ENCODE measurements at regions of chr12 and their contacts with region 1.

Region 1: DNA sequence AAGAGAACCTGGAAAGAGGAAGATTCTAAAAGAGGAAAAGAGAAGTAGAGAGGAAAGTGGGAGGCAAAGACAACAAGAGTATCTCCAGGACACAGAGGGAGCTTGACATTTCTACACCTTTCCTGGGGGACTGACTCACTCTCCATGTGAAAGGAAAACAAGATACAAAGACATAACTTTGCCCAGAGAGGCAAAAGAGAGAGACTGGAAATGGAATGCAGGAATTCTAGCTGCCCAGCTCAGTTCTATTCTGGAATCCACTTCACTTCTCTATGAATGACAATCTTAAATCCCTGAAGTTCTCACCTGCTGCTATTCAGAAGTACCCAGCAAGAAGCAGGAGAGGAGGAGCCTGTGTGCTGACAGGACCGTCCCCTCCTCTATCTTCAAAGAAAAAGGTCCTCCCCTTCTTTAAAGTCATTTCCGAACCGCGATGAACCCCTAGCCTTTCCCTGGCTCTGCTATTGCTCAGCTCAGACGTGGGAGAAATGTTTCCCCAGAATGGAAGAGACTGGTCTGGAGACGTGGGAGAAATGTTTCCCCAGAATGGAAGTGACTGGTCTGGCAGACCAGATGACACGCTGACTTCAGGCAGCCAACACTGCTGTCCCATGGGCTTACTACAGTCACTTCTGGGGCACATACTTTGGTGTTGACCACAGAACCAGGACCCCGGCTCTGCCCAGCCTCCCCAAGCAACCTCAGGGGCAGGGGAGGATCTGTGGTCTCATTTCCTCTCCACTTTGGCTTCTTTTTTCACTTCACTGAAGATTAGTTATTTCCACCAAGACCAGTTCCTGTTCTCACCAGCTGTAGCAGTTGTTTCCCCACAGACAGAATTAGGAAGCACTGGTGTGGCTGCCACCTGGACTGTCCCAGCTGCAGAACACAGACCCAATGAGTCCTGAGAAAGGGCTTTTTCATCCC is 8.3 kb downstream of the FMNL3 start:
- DNase-seq: peak; percentile 91
- ATAC-seq: peak; percentile 79
- H3K4me3 ChIP-seq: peak overlapping the region; percentile 54
- H3K27ac ChIP-seq: peak overlapping the region; percentile 91
- H3K4me1 ChIP-seq: peaks cover 48% of the 10 kb centered on the region
- H3K27me3 ChIP-seq: no peaks in the 10 kb centered on the region
- CTCF ChIP-seq: no peak
- EP300 ChIP-seq: peak; percentile 53 to 60; a peak in 2 of 4 replicates
- POLR2A ChIP-seq: no peak
- RAD21 ChIP-seq: 0 out of 2 replicates have a peak, but pooled peaks have one; percentile 10

Region 2: DNA sequence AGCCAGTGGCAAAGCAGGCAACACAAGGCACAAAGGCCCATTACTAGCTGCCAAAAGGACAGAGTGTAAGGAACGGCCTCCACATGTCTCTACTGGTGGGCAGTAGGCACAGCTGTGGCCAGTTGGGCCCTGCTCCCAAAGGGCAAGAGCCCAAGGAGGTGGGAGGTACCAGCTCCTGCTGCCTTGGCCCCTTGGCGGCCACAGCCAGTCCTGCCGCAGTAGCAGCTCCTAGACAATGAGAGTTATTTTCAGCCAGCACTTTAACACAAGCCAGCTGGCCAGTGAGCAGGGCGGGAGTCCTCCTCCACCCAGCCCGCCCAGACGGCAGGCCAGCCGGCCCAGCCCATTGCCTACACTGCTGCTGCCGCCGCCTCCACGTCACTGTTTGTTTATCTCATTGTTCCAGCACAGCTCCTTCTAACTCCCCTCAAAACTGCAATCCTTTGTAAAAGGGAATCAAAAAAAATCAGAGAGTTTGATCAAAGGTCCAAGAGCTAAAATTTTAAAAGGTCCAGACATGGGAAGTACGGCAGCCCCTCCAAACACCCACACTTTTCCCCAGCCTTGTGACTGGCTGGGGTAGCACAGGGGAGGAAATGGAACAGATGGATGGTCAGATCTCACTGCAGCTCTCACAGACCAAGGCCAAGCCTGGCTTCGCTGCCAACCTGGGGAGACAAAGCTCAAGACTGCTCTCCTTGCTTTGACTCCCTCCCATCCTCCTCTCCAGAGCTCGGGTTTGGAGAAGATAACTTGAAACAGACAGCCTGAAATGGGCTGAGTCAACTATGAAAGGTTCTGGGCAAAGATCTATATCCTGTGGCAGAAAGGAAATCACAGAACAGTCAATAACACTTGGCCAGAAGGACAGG is 25.2 kb before region 1 on chr12:
- CTCF ChIA-PET with region 1: interaction called, 86 read pairs
- POLR2A ChIA-PET with region 1: interaction called, 166 read pairs
- RAD21 ChIA-PET with region 1: interaction called, 167 read pairs
- SMC1A ChIA-PET with region 1: interaction called, 131 read pairs
- in situ Hi-C with region 1: no loop called
- intact Hi-C with region 1: no loop called
- DNase-seq: no peak
- ATAC-seq: no peak; the same call in 2 of the 3 replicates
- H3K4me3 ChIP-seq: no peak overlapping the region
- H3K27ac ChIP-seq: peak overlapping the region; percentile 92
- H3K4me1 ChIP-seq: peaks cover 56% of the 10 kb centered on the region
- H3K27me3 ChIP-seq: no peaks in the 10 kb centered on the region
- CTCF ChIP-seq: no peak
- EP300 ChIP-seq: no peak
- POLR2A ChIP-seq: no peak
- RAD21 ChIP-seq: no peak

Region 3: DNA sequence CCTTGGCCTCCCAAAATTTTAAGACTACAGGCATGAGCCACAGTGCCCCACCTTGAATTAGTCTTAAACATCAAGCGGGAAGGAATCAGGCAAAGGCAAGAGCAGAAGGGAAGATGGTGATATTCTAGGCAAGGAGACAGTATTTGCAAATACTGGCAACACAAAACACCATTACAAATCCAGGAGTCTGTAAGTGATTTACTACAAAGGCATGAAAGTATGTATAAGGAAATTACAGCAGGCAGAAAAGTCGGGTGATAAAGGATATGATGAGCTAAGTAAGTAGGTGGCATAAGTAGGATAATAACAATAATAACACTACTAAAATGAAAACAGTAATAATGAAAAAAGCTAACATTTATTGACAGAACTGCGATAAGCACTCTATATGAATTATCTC is 20.2 kb before region 1 on chr12:
- CTCF ChIA-PET with region 1: interaction called, 86 read pairs
- POLR2A ChIA-PET with region 1: interaction called, 166 read pairs
- RAD21 ChIA-PET with region 1: interaction called, 167 read pairs
- SMC1A ChIA-PET with region 1: interaction called, 131 read pairs
- in situ Hi-C with region 1: no loop called
- intact Hi-C with region 1: no loop called
- DNase-seq: no peak
- ATAC-seq: no peak
- H3K4me3 ChIP-seq: no peak overlapping the region
- H3K27ac ChIP-seq: no peak overlapping the region
- H3K4me1 ChIP-seq: peaks cover 23% of the 10 kb centered on the region
- H3K27me3 ChIP-seq: no peaks in the 10 kb centered on the region
- CTCF ChIP-seq: no peak
- EP300 ChIP-seq: no peak
- POLR2A ChIP-seq: no peak
- RAD21 ChIP-seq: no peak

Region 4: DNA sequence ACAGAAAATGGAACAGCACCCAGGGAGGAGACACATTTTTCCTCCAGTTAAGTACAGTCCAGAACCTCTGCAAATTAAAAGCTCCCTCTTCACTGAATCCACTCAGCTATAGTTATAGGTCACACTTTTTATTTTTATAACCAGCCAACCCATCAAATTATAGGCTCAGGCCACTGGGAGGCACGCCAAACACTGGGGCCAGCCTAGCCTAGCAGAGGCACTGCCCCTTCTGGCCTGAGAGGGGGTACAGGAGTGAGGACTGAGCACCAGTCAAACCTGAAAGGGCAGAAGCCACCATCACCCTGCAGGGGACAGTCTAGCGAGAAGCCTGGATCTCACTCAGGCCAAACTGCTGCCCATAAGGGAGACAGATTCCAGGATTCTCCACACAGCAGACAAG is 10.9 kb before region 1 on chr12:
- CTCF ChIA-PET with region 1: interaction called, 66 read pairs
- POLR2A ChIA-PET with region 1: interaction called, 86 read pairs
- RAD21 ChIA-PET with region 1: interaction called, 73 read pairs
- SMC1A ChIA-PET with region 1: interaction called, 131 read pairs
- in situ Hi-C with region 1: no loop called
- intact Hi-C with region 1: no loop called
- DNase-seq: no peak
- ATAC-seq: peak; percentile 20; the same call in 1 of the 3 replicates
- H3K4me3 ChIP-seq: no peak overlapping the region
- H3K27ac ChIP-seq: no peak overlapping the region
- H3K4me1 ChIP-seq: peaks cover 55% of the 10 kb centered on the region
- H3K27me3 ChIP-seq: no peaks in the 10 kb centered on the region
- CTCF ChIP-seq: no peak
- EP300 ChIP-seq: no peak
- POLR2A ChIP-seq: no peak
- RAD21 ChIP-seq: no peak

Region 5: GRCh38 chr12:49821373-49822287 is 122.7 kb after region 1 on chr12:
- CTCF ChIA-PET with region 1: no interaction called
- POLR2A ChIA-PET with region 1: no interaction called
- RAD21 ChIA-PET with region 1: no interaction called
- SMC1A ChIA-PET with region 1: no interaction called
- in situ Hi-C with region 1: no loop called
- intact Hi-C with region 1: no loop called
- DNase-seq: no peak
- ATAC-seq: no peak
- H3K4me3 ChIP-seq: peak overlapping the region; percentile 8; the same call in 1 of the 2 replicates
- H3K27ac ChIP-seq: peak overlapping the region; percentile 69
- H3K4me1 ChIP-seq: peaks cover 29% of the 10 kb centered on the region
- H3K27me3 ChIP-seq: no peaks in the 10 kb centered on the region
- CTCF ChIP-seq: no peak
- EP300 ChIP-seq: no peak
- POLR2A ChIP-seq: no peak
- RAD21 ChIP-seq: no peak